Caco-2 (cell line): ENCODE measurements at regions of chr11 and their contacts with region 1.

Region 1: DNA sequence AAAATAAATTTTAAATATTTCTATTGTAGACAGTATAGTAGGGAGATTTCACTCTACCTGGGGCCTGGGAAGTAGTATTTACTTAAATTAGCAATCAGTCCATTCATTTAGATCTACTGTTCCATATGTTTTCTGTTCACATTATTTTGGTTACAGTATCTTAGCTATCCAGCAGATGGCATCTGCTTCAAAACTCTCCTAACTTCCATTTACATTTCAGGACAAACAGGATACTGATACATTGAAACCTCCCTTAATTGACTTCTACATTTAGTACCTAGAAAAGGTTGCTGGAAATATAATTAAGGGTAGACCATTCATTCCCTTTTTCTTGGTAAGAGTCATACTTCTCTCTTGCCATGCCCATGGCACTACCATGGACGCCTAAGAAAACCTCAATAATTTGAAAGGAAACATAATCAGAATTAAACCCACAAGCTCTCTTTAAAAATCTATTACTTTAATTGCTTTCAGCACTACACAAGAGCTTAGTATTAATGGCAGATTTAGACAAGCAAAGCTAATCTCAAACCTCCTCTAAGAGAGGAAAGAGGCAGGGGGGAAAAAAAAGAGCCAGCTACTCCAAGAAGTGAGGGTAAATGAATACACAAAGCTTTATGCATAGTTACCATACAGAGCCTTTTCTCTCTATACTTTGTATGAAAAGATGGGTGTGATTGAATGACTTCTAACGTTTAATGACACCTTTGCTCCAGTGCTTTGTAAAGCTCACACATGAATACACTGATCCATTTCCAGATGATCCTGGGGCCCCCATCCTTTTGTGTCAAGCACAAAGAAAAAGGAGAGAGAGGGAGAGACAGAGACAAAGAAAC is 131.2 kb upstream of the MTMR2 start:
- DNase-seq: peak in 1 of 2 experiments; percentile 48
- H3K4me3 ChIP-seq: no peak overlapping the region
- H3K4me3 Mint-ChIP-seq: no peak overlapping the region
- H3K27ac Mint-ChIP-seq: no peak overlapping the region
- H3K4me1 ChIP-seq: peaks cover 44% of the 10 kb centered on the region
- H3K4me1 Mint-ChIP-seq: peaks cover 43% of the 10 kb centered on the region
- H3K27me3 ChIP-seq: no peaks in the 10 kb centered on the region
- H3K27me3 Mint-ChIP-seq: no peaks in the 10 kb centered on the region
- CTCF ChIP-seq: peak; percentile 77 to 81

Region 2: DNA sequence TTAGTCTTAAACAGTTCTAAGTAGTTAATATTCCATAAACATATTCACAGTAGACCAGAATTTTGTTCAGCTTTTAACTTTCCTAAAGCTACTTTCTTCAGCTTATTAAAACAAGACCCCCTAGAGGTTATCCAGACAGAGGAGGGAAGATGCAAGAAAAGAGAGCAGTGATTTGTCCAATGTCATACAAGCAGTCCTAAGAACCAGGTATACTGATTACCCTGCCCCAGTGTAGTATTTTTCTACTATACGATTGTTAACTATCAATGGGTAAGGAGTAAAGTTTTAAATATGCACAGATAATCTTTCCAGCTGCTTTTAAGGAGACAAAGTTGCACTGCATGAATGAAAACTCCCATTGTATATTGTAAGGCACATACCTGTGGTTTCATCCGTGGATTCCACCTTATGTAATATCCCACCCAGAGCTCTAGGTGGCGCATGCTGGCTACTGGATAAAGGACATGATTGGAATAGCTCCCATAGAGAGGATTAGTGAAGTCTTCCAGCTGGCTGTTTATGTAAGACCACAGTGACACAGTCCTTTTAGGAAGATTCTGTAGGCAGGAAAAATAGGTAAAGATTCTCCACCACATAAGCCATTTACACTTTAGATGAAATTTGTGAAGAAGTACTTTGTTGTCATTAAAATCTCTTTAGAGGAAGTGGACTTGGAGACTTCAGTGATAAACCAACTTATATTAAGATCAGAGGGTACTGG is 219.2 kb before region 1 on chr11:
- CTCF ChIA-PET with region 1: interaction called, 4 read pairs
- POLR2A ChIA-PET with region 1: no interaction called
- intact Hi-C with region 1: loop called (anchors 1 kb)
- DNase-seq: peak; percentile 84 to 85
- H3K4me3 ChIP-seq: no peak overlapping the region
- H3K4me3 Mint-ChIP-seq: no peak overlapping the region
- H3K27ac Mint-ChIP-seq: no peak overlapping the region
- H3K4me1 ChIP-seq: no peaks in the 10 kb centered on the region; the same call in 1 of the 2 replicates
- H3K4me1 Mint-ChIP-seq: peaks cover 6% of the 10 kb centered on the region
- H3K27me3 ChIP-seq: no peaks in the 10 kb centered on the region
- H3K27me3 Mint-ChIP-seq: no peaks in the 10 kb centered on the region
- CTCF ChIP-seq: peak; percentile 97 to 98

Region 3: GRCh38 chr11:95923728-95924413 is 131.2 kb before region 1 on chr11 and contains the start of gene MTMR2:
- CTCF ChIA-PET with region 1: no interaction called
- POLR2A ChIA-PET with region 1: no interaction called
- intact Hi-C with region 1: loop called (anchors 1 kb)
- DNase-seq: peak; percentile 88 to 91
- H3K4me3 ChIP-seq: peak within 1 kb of the TSS; percentile 84
- H3K4me3 Mint-ChIP-seq: peak within 1 kb of the TSS; percentile 88
- H3K27ac Mint-ChIP-seq: peak within 1 kb of the TSS; percentile 96
- H3K4me1 ChIP-seq: peaks cover 6% of the 10 kb centered on the region
- H3K4me1 Mint-ChIP-seq: peaks cover 13% of the 10 kb centered on the region
- H3K27me3 ChIP-seq: no peaks in the 10 kb centered on the region
- H3K27me3 Mint-ChIP-seq: no peaks in the 10 kb centered on the region
- CTCF ChIP-seq: peak in 1 of 2 experiments; percentile 14
- total RNA-seq, gene MTMR2: 75.2 and 76.4 TPM in 2 replicates

Region 4: GRCh38 chr11:96149743-96150555 is 94.9 kb after region 1 on chr11:
- CTCF ChIA-PET with region 1: interaction called, 27 read pairs
- POLR2A ChIA-PET with region 1: no interaction called
- intact Hi-C with region 1: loop called (anchors 1 kb)
- DNase-seq: no peak
- H3K4me3 ChIP-seq: no peak overlapping the region
- H3K4me3 Mint-ChIP-seq: no peak overlapping the region
- H3K27ac Mint-ChIP-seq: no peak overlapping the region
- H3K4me1 ChIP-seq: peaks cover 59% of the 10 kb centered on the region
- H3K4me1 Mint-ChIP-seq: peaks cover 35% of the 10 kb centered on the region
- H3K27me3 ChIP-seq: no peaks in the 10 kb centered on the region
- H3K27me3 Mint-ChIP-seq: no peaks in the 10 kb centered on the region
- CTCF ChIP-seq: no peak

Region 5: GRCh38 chr11:96199563-96200025 is 144.5 kb after region 1 on chr11:
- CTCF ChIA-PET with region 1: interaction called, 3 read pairs
- POLR2A ChIA-PET with region 1: no interaction called
- intact Hi-C with region 1: loop called (anchors 2 kb)
- DNase-seq: no peak
- H3K4me3 ChIP-seq: no peak overlapping the region
- H3K4me3 Mint-ChIP-seq: no peak overlapping the region
- H3K27ac Mint-ChIP-seq: peak overlapping the region; percentile 90
- H3K4me1 ChIP-seq: peaks cover 30% of the 10 kb centered on the region
- H3K4me1 Mint-ChIP-seq: peaks cover 31% of the 10 kb centered on the region
- H3K27me3 ChIP-seq: no peaks in the 10 kb centered on the region
- H3K27me3 Mint-ChIP-seq: no peaks in the 10 kb centered on the region
- CTCF ChIP-seq: no peak

Region 6: DNA sequence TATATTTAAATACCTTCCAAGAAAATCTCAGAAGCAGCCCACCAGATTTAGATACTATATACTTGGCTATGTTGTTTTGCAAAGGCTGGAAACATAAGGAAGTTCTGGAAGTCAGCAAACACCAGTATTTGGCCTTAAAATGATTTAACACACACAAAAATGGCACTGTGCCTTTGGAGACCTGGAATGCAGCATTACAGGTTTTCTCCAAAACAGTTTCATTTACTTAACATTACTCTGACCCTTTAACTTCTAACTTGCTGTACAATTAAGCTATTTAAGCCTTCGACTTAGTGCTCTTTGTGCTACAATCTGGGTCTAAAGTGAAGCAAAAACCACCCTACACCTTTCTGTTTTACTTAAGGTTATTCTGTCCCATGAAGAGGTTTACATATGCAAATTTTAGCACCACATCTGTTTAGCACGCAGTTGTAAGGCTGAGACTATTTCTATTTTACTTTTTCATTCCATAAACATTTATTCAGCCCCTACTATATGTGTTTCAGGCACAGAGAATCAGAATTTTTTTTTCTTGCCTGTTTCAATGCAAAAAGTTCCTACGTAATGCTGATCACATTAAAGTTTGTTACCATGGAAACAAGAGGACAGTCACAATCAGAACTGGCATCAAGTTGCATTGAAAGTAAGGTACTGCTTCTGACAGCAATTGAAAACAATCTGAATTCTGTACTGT is 217.6 kb after region 1 on chr11:
- CTCF ChIA-PET with region 1: no interaction called
- POLR2A ChIA-PET with region 1: no interaction called
- intact Hi-C with region 1: loop called (anchors 1 kb)
- DNase-seq: peak in 1 of 2 experiments; percentile 77
- H3K4me3 ChIP-seq: peak overlapping the region; percentile 4; the same call in 1 of the 2 replicates
- H3K4me3 Mint-ChIP-seq: peak overlapping the region; percentile 70
- H3K27ac Mint-ChIP-seq: peak overlapping the region; percentile 96
- H3K4me1 ChIP-seq: peaks cover 46% of the 10 kb centered on the region
- H3K4me1 Mint-ChIP-seq: peaks cover 37% of the 10 kb centered on the region
- H3K27me3 ChIP-seq: no peaks in the 10 kb centered on the region
- H3K27me3 Mint-ChIP-seq: no peaks in the 10 kb centered on the region
- CTCF ChIP-seq: no peak

Region 7: DNA sequence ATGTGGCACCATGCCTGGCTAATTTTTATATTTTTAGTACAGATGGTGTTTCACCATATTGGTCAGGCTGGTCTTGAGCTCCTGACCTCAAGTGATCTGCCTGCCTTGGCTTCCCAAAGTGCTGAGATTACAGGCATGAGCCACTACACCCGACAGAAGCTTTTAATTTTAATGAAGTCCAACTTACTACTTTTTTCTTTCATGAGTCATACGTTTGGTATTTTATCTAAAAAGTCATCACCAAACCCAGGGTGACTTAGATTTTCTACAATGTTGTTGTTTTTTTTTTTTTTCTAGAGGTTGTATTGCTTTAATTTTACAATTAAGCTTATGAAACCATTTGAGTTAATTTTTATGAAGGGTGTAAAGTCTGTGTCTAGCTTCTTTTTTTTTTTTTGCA is 369.6 kb after region 1 on chr11:
- CTCF ChIA-PET with region 1: no interaction called
- POLR2A ChIA-PET with region 1: no interaction called
- intact Hi-C with region 1: loop called (anchors 1 kb)
- DNase-seq: no peak
- H3K4me3 ChIP-seq: no peak overlapping the region
- H3K4me3 Mint-ChIP-seq: no peak overlapping the region
- H3K27ac Mint-ChIP-seq: no peak overlapping the region
- H3K4me1 ChIP-seq: peaks cover 5% of the 10 kb centered on the region; the same call in 1 of the 2 replicates
- H3K4me1 Mint-ChIP-seq: no peaks in the 10 kb centered on the region
- H3K27me3 ChIP-seq: no peaks in the 10 kb centered on the region; the same call in 1 of the 2 replicates
- H3K27me3 Mint-ChIP-seq: peaks cover 19% of the 10 kb centered on the region
- CTCF ChIP-seq: no peak